GM12878 (cell line): ENCODE measurements at regions of chr4 and their contacts with region 1.

Region 1: DNA sequence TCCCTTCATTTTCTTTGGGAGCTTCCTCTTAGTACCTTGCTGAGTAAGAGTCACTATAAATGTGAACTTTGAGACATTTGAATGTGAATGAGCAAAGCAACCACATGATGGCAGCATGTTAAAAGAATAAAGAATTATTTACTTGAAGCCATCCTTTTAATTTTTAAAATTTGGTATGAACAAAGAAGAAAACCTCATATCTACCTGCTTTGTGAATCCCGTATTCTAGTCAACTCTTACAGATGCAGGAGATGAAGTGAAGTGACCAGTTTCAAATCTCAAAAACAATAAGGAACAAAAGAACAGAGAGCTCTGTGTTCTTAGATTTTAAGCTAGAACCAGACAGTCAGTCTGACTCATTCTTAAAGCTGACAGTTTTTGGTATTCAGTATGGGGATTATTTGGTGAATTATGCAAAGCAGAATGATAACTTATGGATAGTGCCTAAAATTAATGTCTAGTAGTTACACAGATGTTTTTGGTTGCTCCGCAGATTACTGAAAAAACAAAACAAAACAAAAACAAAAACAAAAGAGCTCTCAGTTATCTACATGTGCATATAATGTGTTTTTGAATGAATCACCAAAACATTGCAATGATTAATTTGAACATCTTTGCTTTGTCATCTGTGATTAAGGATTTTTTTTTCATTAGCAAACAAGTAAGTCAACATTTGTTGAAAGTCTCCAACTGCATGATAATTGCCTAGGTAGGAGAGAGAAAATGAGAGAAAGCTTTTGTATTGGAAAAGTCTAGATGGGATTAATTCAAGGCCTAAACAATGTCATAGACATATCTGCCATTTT is 48.2 kb upstream of the H2AZ1 start:
- DNase-seq: peak; percentile 2
- ATAC-seq: peak; percentile 73
- H3K4me3 ChIP-seq: no peak overlapping the region
- H3K27ac ChIP-seq: no peak overlapping the region
- H3K4me1 ChIP-seq: no peaks in the 10 kb centered on the region
- H3K27me3 ChIP-seq: no peaks in the 10 kb centered on the region
- CTCF ChIP-seq: peak; percentile 19 to 45 (median 30); a peak in 3 of 6 replicates
- EP300 ChIP-seq: no peak
- POLR2A ChIP-seq: no peak
- RAD21 ChIP-seq: peak; percentile 52

Region 2: GRCh38 chr4:99986792-99987191 is 11.5 kb before region 1 on chr4:
- CTCF ChIA-PET with region 1: interaction called, 16 read pairs
- POLR2A ChIA-PET with region 1: no interaction called
- RAD21 ChIA-PET with region 1: interaction called, 7 read pairs
- SMC1A ChIA-PET with region 1: interaction called, 14 read pairs
- in situ Hi-C with region 1: no loop called
- intact Hi-C with region 1: no loop called
- DNase-seq: peak; percentile 3
- ATAC-seq: peak; percentile 87
- H3K4me3 ChIP-seq: no peak overlapping the region
- H3K27ac ChIP-seq: no peak overlapping the region
- H3K4me1 ChIP-seq: peaks cover 7% of the 10 kb centered on the region; the same call in 1 of the 2 replicates
- H3K27me3 ChIP-seq: no peaks in the 10 kb centered on the region
- CTCF ChIP-seq: no peak
- EP300 ChIP-seq: no peak
- POLR2A ChIP-seq: no peak
- RAD21 ChIP-seq: no peak

Region 3: GRCh38 chr4:100060765-100061416 is 62.6 kb after region 1 on chr4:
- CTCF ChIA-PET with region 1: interaction called, 15 read pairs
- POLR2A ChIA-PET with region 1: no interaction called
- RAD21 ChIA-PET with region 1: interaction called, 9 read pairs
- SMC1A ChIA-PET with region 1: interaction called, 9 read pairs
- in situ Hi-C with region 1: no loop called
- intact Hi-C with region 1: loop called (anchors 5 kb)
- DNase-seq: no peak
- ATAC-seq: peak; percentile 83
- H3K4me3 ChIP-seq: no peak overlapping the region
- H3K27ac ChIP-seq: no peak overlapping the region
- H3K4me1 ChIP-seq: no peaks in the 10 kb centered on the region
- H3K27me3 ChIP-seq: no peaks in the 10 kb centered on the region
- CTCF ChIP-seq: no peak
- EP300 ChIP-seq: no peak
- POLR2A ChIP-seq: no peak
- RAD21 ChIP-seq: no peak